ENCODE measurements at regions of chr4 and their contacts with region 1.

Region 1: GRCh38 chr4:6109842-6110719 is 90.3 kb downstream of the JAKMIP1 start:
- DNase-seq: peak; percentile 62 to 82
- H3K4me3 ChIP-seq: no peak overlapping the region
- H3K27ac ChIP-seq: no peak overlapping the region
- H3K4me1 ChIP-seq: peaks cover 1 to 14% (median 6%) of the 10 kb centered on the region in 4 experiments
- H3K27me3 ChIP-seq: no peaks in the 10 kb centered on the region; a peak in 1 of 7 replicates
- CTCF ChIP-seq: peak in 2 of 3 experiments; percentile 79 to 92; a peak in 3 of 4 replicates
- EP300 ChIP-seq: no peak
- POLR2A ChIP-seq: no peak
- RAD21 ChIP-seq: peak; percentile 48 to 65

Region 2: DNA sequence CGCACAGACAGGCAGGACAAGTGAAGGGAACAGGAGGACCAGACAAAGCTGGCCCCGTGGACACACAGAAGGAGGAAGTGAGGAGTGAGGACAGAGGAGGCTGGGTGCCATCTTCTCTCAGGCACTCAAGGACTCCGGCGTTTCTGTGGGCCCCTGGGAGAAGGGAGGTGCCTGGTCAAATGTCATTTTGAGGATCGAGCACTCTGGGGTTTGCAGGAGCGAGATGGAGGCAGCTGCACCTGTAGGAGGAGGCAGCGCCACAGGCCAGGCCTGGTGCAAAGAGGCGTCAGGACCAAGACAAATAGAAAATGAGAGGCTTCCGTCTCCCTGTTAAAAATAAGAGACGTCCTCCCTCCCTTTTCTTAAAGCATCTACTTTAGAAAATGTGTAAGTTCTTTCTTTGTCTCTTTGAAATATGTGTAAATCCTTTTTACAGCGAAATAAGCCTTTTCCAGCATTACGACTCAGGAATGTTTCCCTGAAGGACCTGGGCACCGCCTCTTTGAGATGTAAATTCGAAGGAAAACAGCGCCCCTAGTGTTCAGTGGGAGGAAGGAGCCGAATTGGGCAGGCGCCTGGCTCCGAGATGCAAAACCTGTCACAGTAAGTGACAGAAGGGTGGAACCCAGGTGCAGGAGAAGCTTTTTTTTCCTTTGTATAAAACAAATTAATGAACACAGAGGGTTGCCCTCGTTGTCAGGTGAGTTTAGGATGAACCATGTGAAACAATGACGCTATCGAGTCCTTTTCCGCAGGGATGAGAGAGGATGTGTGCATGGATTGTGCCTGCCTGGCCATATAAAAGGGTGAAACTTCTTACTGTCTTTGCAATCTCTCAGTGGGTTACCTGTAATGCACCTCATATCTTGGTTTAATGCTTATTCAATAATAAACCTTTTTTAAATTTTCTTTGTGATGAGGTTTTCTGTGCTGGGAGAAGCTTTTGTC is 90.5 kb before region 1 on chr4:
- CTCF ChIA-PET with region 1: interaction called, 11 read pairs
- POLR2A ChIA-PET with region 1: interaction called, 3 read pairs
- DNase-seq: peak in 1 of 2 experiments; percentile 79
- H3K4me3 ChIP-seq: peak overlapping the region in 1 of 4 experiments; percentile 16; a peak in 1 of 8 replicates
- H3K27ac ChIP-seq: no peak overlapping the region
- H3K4me1 ChIP-seq: peaks cover 0 to 8% (median 5%) of the 10 kb centered on the region in 4 experiments; a peak in 6 of 7 replicates
- H3K27me3 ChIP-seq: no peaks in the 10 kb centered on the region
- CTCF ChIP-seq: peak in 2 of 3 experiments; percentile 79 to 87; a peak in 3 of 4 replicates
- EP300 ChIP-seq: no peak
- POLR2A ChIP-seq: no peak
- RAD21 ChIP-seq: peak; percentile 27 to 40; a peak in 3 of 4 replicates

Region 3: DNA sequence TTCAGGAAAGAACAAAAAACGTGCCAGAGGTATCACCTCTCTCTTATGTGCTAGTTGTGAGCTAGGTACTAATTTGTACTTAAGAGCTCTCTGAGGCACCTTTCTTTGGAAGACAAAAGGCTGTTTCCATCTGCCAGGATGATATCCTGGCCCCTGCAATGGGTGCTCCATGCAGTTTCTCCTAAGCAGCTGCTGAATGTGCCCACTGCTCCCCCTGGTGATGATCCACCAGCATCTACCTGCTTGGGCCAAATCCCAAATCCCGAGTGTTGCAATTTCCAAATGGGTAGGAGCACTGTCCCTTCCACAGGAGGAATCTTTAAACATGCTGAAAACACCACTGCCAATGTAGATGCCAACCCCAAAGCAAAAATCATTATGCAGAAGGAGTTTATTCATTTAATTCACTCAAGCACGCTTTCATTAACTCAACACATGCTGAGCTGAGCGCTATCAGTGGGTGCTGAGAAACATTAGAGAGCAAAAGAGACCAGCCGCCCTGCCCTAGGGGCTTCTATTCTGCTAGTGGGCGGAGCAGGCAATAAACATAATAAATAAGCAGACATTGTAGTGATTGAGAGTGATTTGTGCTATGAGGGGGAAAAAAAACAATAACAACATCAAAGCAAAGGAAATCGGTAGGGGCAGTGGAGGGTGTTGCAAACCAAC is 22.3 kb before region 1 on chr4:
- CTCF ChIA-PET with region 1: interaction called, 24 read pairs
- POLR2A ChIA-PET with region 1: no interaction called
- DNase-seq: peak; percentile 59 to 75
- H3K4me3 ChIP-seq: no peak overlapping the region
- H3K27ac ChIP-seq: no peak overlapping the region
- H3K4me1 ChIP-seq: peaks cover 0 to 8% (median 4%) of the 10 kb centered on the region in 4 experiments; a peak in 4 of 7 replicates
- H3K27me3 ChIP-seq: 0 out of 7 replicates have a peak, but pooled peaks cover 0 to 3% (median 0%) of the 10 kb centered on the region in 4 experiments
- CTCF ChIP-seq: peak; percentile 86 to 88 (median 88)
- EP300 ChIP-seq: no peak
- POLR2A ChIP-seq: no peak
- RAD21 ChIP-seq: peak; percentile 82 to 87

Region 4: GRCh38 chr4:6095023-6095752 is 14.9 kb before region 1 on chr4:
- CTCF ChIA-PET with region 1: interaction called, 23 read pairs
- POLR2A ChIA-PET with region 1: interaction called, 3 read pairs
- DNase-seq: no peak
- H3K4me3 ChIP-seq: no peak overlapping the region
- H3K27ac ChIP-seq: no peak overlapping the region
- H3K4me1 ChIP-seq: peaks cover 0 to 5% (median 0%) of the 10 kb centered on the region in 4 experiments; a peak in 1 of 7 replicates
- H3K27me3 ChIP-seq: no peaks in the 10 kb centered on the region; a peak in 1 of 7 replicates
- CTCF ChIP-seq: no peak
- EP300 ChIP-seq: no peak
- POLR2A ChIP-seq: no peak
- RAD21 ChIP-seq: no peak

Region 5: GRCh38 chr4:6134612-6135220 is 24.6 kb after region 1 on chr4:
- CTCF ChIA-PET with region 1: interaction called, 14 read pairs
- POLR2A ChIA-PET with region 1: no interaction called
- DNase-seq: no peak
- H3K4me3 ChIP-seq: no peak overlapping the region
- H3K27ac ChIP-seq: no peak overlapping the region
- H3K4me1 ChIP-seq: peaks cover 0 to 3% (median 3%) of the 10 kb centered on the region in 4 experiments; a peak in 3 of 7 replicates
- H3K27me3 ChIP-seq: no peaks in the 10 kb centered on the region; a peak in 1 of 7 replicates
- CTCF ChIP-seq: peak; percentile 47 to 97 (median 65)
- EP300 ChIP-seq: no peak
- POLR2A ChIP-seq: no peak
- RAD21 ChIP-seq: peak; percentile 51 to 64; a peak in 3 of 4 replicates

Region 6: GRCh38 chr4:6200011-6200921 is 90.2 kb after region 1 on chr4 and contains the start of gene JAKMIP1:
- CTCF ChIA-PET with region 1: interaction called, 10 read pairs
- POLR2A ChIA-PET with region 1: interaction called, 3 read pairs
- DNase-seq: peak in 1 of 2 experiments; percentile 98
- H3K4me3 ChIP-seq: peak within 1 kb of the TSS; percentile 54 to 80 (median 56)
- H3K27ac ChIP-seq: no peak within 1 kb of the TSS
- H3K4me1 ChIP-seq: peaks cover 10 to 36% (median 19%) of the 10 kb centered on the region in 4 experiments
- H3K27me3 ChIP-seq: peaks cover 0 to 14% (median 9%) of the 10 kb centered on the region in 4 experiments; a peak in 5 of 7 replicates
- CTCF ChIP-seq: no peak
- EP300 ChIP-seq: no peak
- POLR2A ChIP-seq: no peak
- RAD21 ChIP-seq: no peak
- total RNA-seq, gene JAKMIP1: 3.9 and 4.4 TPM in 2 replicates

Measured in H1 (cell line).